ENCODE measurements at regions of chr4 and their contacts with region 1.

Region 1: DNA sequence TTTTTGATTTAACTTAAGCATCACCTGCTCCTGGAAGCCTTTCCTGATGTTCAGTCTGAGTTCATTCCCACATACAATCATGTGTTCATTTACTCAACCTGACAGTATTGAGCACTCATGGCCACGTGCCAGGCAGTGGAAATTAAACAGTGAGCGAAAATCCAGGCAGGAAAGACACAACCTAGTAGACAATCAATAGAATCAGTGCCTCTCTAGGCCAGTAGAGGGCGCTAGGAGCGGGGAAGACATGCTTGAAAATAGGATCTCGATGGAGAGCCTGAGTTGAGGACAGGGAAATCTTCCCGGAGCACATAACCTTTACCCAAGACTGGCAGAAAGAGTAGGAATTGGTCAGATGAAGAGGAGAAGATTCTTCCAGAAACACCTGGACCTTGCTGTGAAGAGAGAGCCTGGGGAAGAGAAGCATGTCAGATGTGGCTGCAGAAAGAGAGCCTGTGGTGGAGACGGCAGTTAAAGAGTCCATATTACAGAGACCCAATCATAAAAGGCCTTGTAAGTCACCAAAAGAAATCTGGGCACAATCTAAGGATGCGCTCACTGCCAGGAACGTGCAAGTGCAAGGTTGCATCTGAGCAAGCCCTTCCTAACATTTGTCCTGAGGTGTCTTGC is 103.5 kb downstream of the LDB2 start:
- DNase-seq: no peak
- H3K4me3 Mint-ChIP-seq: no peak overlapping the region
- H3K27ac Mint-ChIP-seq: no peak overlapping the region
- H3K4me1 Mint-ChIP-seq: no peaks in the 10 kb centered on the region
- H3K27me3 Mint-ChIP-seq: peaks cover 2% of the 10 kb centered on the region

Region 2: DNA sequence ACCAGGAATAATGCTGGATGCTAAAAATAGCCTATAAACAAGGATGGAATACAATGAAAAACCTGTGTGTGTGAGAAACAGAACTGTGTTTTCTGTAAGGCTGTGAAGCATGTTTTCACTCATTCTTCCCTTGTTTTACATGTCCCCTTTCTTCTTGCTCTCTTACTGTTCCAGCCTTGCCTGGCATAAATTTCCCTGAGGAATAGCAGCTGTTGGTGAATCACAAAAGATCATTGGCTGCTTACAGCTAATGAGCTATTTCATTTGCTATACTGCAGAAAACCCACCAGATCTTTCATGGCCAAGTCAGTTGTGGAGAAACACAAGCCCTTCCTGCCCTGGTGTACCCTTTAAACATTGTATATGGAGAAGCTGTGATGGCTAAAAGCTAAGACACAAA is 12.4 kb after region 1 on chr4:
- intact Hi-C with region 1: no loop called
- DNase-seq: no peak
- H3K4me3 Mint-ChIP-seq: no peak overlapping the region
- H3K27ac Mint-ChIP-seq: no peak overlapping the region
- H3K4me1 Mint-ChIP-seq: no peaks in the 10 kb centered on the region
- H3K27me3 Mint-ChIP-seq: peaks cover 3% of the 10 kb centered on the region

Region 3: DNA sequence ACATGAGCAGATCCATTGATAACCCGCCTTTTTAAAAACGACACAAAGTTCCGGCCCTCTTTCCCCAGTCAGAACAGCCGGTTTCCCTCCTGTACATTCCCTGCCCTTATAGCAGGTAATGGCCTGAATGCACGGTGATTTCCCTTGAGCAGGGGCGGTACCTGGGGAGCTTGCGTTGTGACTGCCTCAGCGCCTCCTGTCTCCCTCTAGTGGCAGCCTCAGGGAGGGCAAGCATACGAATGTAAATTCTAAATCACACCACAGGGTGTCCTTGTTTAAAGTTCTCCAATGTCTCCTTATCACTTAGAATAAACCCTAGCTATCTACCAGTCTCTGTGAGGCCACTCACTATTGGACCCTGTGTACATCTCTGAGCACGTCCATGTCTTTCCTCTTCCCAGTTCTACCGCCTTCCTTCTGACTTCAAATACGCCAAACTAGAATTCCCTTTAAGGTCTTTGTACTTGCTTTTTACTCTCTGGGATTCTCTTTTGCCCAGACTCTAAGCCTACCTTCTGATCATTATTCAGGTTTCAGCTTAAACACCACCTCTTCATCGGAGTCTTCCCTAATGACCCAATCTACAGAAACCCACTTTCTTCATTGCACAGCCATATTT is 121.9 kb after region 1 on chr4:
- intact Hi-C with region 1: loop called (anchors 1 kb)
- DNase-seq: peak; percentile 72
- H3K4me3 Mint-ChIP-seq: no peak overlapping the region
- H3K27ac Mint-ChIP-seq: no peak overlapping the region
- H3K4me1 Mint-ChIP-seq: peaks cover 10% of the 10 kb centered on the region
- H3K27me3 Mint-ChIP-seq: peaks cover 2% of the 10 kb centered on the region

Measured in activated T-helper 2 cell treated with anti-CD3 and anti-CD28 coated beads, Interferon-gamma antibody, Interleukin-2, Interleukin-4, amounts not matched to agents 10 μg/mL and 5 μg/mL and 100 μg/mL, durations not matched to agents 14 hours and 24 hours and 36 hours (primary cell).